ENCODE measurements at regions of chr3 and their contacts with region 1.

Region 1: GRCh38 chr3:169497567-169498257 is 165.8 kb downstream of the MECOM start:
- DNase-seq: no peak
- H3K4me3 ChIP-seq: no peak overlapping the region
- H3K27ac ChIP-seq: no peak overlapping the region
- H3K4me1 ChIP-seq: no peaks in the 10 kb centered on the region
- H3K27me3 ChIP-seq: peaks cover 55% of the 10 kb centered on the region
- CTCF ChIP-seq: no peak

Region 2: DNA sequence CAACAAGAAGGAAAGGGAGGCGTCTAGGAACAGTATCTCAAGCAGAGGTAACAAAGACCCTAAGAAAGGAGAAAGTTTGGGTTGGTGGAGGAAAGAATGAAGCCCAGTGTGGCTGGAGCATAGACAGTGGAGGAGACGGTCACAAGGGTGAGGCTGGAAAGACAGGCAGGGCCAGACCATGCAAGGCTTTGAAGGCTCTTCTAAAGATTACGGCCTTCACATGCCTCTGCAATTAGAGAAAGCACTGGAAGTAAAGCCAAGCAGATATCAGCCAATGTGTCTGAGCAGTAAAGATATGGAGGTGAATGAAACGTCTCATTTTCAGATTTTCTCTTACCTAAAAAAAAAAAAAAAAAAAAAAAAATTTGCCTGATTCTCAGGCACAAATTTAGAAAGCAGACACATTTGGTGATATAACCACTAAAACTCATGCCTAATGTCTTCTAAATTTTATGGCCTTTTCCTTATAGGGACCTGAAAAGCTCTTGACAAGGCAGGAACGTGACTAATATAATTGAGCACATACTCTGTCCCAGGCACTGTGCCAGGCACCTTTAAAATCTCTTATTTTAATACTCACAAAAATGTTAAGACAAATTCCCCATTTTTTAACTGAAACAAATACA is 18.3 kb before region 1 on chr3:
- CTCF ChIA-PET with region 1: interaction called, 11 read pairs
- POLR2A ChIA-PET with region 1: no interaction called
- intact Hi-C with region 1: no loop called
- DNase-seq: no peak
- H3K4me3 ChIP-seq: no peak overlapping the region
- H3K27ac ChIP-seq: no peak overlapping the region
- H3K4me1 ChIP-seq: no peaks in the 10 kb centered on the region
- H3K27me3 ChIP-seq: peaks cover 44% of the 10 kb centered on the region
- CTCF ChIP-seq: no peak

Region 3: DNA sequence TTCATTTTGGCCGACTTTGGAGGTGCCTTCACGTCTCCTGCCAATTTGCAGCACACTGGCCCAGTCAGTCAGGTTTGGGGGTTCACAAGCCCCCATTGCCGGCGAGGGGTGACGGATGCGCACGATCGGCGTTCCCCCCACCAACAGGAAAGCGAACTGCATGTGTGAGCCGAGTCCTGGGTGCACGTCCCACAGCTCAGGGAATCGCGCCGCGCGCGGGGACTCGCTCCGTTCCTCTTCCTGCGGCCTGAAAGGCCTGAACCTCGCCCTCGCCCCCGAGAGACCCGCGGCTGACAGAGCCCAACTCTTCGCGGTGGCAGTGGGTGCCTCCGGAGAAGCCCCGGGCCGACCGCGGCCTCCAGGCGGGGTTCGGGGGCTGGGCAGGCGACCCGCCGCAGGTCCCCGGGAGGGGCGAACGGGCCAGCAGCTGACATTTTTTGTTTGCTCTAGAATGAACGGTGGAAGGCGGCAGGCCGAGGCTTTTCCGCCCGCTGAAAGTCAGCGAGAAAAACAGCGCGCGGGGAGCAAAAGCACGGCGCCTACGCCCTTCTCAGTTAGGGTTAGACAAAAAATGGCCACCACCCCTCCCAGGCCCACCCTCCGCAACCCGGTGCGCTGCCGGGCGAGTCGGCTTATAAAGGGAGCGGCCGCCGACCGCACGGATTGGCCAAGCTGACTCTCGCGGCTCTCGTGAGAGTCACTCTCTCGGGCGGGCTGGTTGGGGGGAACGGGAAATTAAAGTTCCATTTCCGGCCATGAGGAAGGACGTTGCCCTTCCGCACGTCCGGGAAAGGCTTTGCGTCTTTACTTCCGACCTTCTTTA is 267.0 kb after region 1 on chr3 and contains the start of gene TERC:
- CTCF ChIA-PET with region 1: no interaction called
- POLR2A ChIA-PET with region 1: no interaction called
- intact Hi-C with region 1: no loop called
- DNase-seq: peak; percentile 92
- H3K4me3 ChIP-seq: peak within 1 kb of the TSS; percentile 73
- H3K27ac ChIP-seq: peak within 1 kb of the TSS; percentile 90
- H3K4me1 ChIP-seq: no peaks in the 10 kb centered on the region
- H3K27me3 ChIP-seq: no peaks in the 10 kb centered on the region
- CTCF ChIP-seq: no peak
- total RNA-seq, gene TERC: 5.8 and 16.7 TPM in 2 replicates